Transverse colon (tissue), 4 donors: ENCODE measurements at regions of chr17 and their contacts with region 1.

Region 1: DNA sequence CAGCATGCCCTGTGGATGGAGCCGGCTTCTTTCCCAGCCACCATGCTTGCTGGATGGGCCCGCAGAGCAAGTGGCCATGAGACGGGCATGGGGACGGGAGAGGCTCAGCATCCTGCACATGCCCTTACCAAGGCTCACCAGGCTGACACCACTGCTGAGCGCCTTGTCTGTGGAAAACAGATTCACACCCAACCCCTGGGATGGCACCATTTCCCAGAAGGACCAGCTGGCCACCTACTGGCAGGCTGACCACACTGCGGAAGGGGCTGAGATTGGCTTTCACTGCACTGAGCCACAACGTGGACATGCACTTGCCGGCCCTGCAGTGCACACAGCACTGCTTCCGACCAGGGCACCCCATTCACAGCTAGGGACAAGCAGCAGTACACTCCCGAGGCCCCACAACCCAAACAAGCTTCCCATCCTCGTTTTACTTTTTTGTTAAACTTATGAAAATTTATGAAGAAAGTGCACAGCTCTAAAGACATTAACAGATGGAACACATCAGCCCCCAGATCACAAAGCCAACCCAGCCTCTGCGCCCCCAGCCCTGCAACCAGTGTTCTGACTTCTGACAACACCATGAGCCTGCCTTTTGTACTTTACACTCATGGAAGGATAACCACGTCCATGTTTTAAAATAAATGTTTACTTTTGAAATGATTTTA is 13.9 kb upstream of the KRTAP17-1 start:
- DNase-seq: peak; percentile 56
- H3K4me3 ChIP-seq: no peak overlapping the region
- H3K27ac ChIP-seq: no peak overlapping the region
- H3K4me1 ChIP-seq: no peaks in the 10 kb centered on the region
- H3K27me3 ChIP-seq: no peaks in the 10 kb centered on the region
- CTCF ChIP-seq: peak; percentile 43 to 73 (median 67)
- EP300 ChIP-seq: no peak
- POLR2A ChIP-seq: no peak

Region 2: GRCh38 chr17:40818733-40819527 is 510.5 kb before region 1 on chr17:
- in situ Hi-C with region 1: loop called in 1 of 4 experiments (anchors 25 kb)
- intact Hi-C with region 1: no loop called
- DNase-seq: peak; percentile 84
- H3K4me3 ChIP-seq: peak overlapping the region; percentile 60 to 79 (median 76)
- H3K27ac ChIP-seq: peak overlapping the region; percentile 84 to 92 (median 88)
- H3K4me1 ChIP-seq: peaks cover 0 to 18% (median 5%) of the 10 kb centered on the region in 4 donors
- H3K27me3 ChIP-seq: peaks cover 10% of the 10 kb centered on the region
- CTCF ChIP-seq: no peak
- EP300 ChIP-seq: no peak
- POLR2A ChIP-seq: no peak

Region 3: GRCh38 chr17:41367426-41368075 is 38.1 kb after region 1 on chr17:
- in situ Hi-C with region 1: no loop called
- intact Hi-C with region 1: no loop called
- DNase-seq: no peak
- H3K4me3 ChIP-seq: no peak overlapping the region
- H3K27ac ChIP-seq: no peak overlapping the region
- H3K4me1 ChIP-seq: no peaks in the 10 kb centered on the region
- H3K27me3 ChIP-seq: no peaks in the 10 kb centered on the region
- CTCF ChIP-seq: no peak
- EP300 ChIP-seq: no peak
- POLR2A ChIP-seq: no peak